ENCODE measurements at regions of chr13 and their contacts with region 1.

Region 1: GRCh38 chr13:110799246-110800236 is 86.0 kb downstream of the ING1 start:
- DNase-seq: peak in 4 of 5 donors; percentile 41 to 86 (median 77)
- H3K4me3 ChIP-seq: peak overlapping the region; percentile 28 to 43 (median 37)
- H3K27ac ChIP-seq: peak overlapping the region; percentile 51 to 71
- H3K4me1 ChIP-seq: no peaks in the 10 kb centered on the region
- H3K27me3 ChIP-seq: no peaks in the 10 kb centered on the region
- CTCF ChIP-seq: no peak

Region 2: DNA sequence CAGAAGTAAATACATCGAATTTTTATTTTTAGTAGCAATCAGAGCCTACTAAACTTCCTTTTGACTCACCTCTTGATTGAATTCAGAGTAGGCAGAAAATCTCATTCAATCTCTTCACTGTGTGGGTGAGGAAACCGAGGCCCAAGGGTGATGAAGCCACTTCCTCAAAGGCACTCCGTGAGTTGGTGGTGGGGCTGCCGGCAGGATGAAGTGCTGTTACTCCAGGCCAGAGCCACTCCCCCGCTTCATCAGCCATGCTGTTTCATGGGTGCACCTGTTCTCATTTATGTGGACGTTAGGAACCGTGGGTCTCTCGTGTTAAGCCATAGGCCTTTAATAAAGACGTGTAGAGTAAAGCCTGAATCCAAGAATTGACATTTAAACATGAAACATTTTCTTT is 72.8 kb before region 1 on chr13:
- intact Hi-C with region 1: loop called (anchors 10 kb)
- DNase-seq: no peak
- H3K4me3 ChIP-seq: no peak overlapping the region
- H3K27ac ChIP-seq: no peak overlapping the region
- H3K4me1 ChIP-seq: no peaks in the 10 kb centered on the region
- H3K27me3 ChIP-seq: no peaks in the 10 kb centered on the region
- CTCF ChIP-seq: no peak

Region 3: GRCh38 chr13:111095031-111095840 is 295.7 kb after region 1 on chr13:
- intact Hi-C with region 1: no loop called
- DNase-seq: peak in 1 of 5 donors; percentile 37
- H3K4me3 ChIP-seq: no peak overlapping the region
- H3K27ac ChIP-seq: no peak overlapping the region
- H3K4me1 ChIP-seq: no peaks in the 10 kb centered on the region
- H3K27me3 ChIP-seq: peaks cover 2% of the 10 kb centered on the region
- CTCF ChIP-seq: no peak

Measured in kidney (tissue), 22 donors.